ENCODE measurements at regions of chr7 and their contacts with region 1.

Region 1: DNA sequence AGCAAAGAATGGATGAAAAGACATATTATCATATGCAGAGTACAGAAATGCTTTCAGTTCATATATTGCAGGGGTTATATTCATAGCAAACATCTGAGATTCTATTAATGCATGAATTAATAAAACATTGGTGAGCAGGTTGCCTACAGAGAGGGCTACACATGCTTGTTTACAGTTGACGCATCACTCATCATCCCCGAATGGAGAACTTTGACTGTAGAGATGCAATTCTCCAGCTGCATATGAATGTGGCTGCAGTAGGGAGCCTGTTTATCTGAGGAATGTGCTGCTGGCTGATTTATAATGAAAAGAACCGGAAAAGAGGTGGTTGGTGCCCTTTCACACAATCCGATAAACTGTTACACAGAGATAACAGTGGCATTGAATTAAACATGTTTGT is 116.5 kb downstream of the GRM3 start:
- DNase-seq: no peak
- ATAC-seq: no peak
- H3K4me3 Mint-ChIP-seq: no peak overlapping the region
- H3K27ac Mint-ChIP-seq: no peak overlapping the region
- H3K4me1 Mint-ChIP-seq: no peaks in the 10 kb centered on the region
- H3K27me3 Mint-ChIP-seq: no peaks in the 10 kb centered on the region

Region 2: DNA sequence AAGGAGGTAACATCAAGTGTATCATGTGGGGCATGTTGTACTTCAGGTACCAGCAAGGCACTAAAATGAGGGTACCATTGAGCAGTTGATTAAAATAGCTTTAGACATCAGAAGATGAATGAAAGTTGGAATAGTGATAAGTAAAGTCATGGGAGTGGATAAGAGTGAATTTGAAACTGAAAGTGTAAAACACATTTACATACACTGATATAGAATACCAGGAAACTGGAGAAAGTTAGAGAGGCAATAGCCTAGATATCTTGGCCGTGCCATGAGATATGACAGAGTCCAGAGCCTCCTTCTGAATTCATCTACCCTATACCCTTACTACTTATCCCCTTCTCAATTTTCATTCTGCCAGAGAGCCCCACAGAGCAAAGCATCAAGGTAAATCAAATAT is 39.9 kb before region 1 on chr7:
- CTCF ChIA-PET with region 1: no interaction called
- POLR2A ChIA-PET with region 1: no interaction called
- intact Hi-C with region 1: no loop called
- DNase-seq: no peak
- ATAC-seq: no peak
- H3K4me3 Mint-ChIP-seq: no peak overlapping the region
- H3K27ac Mint-ChIP-seq: no peak overlapping the region
- H3K4me1 Mint-ChIP-seq: no peaks in the 10 kb centered on the region
- H3K27me3 Mint-ChIP-seq: no peaks in the 10 kb centered on the region

Region 3: GRCh38 chr7:86748843-86749719 is 11.2 kb before region 1 on chr7:
- CTCF ChIA-PET with region 1: no interaction called
- POLR2A ChIA-PET with region 1: no interaction called
- intact Hi-C with region 1: loop called in 1 of 2 experiments (anchors 1 kb)
- DNase-seq: no peak
- ATAC-seq: no peak
- H3K4me3 Mint-ChIP-seq: no peak overlapping the region
- H3K27ac Mint-ChIP-seq: no peak overlapping the region
- H3K4me1 Mint-ChIP-seq: no peaks in the 10 kb centered on the region
- H3K27me3 Mint-ChIP-seq: peaks cover 2% of the 10 kb centered on the region

Region 4: GRCh38 chr7:86773309-86773708 is 13.1 kb after region 1 on chr7:
- CTCF ChIA-PET with region 1: no interaction called
- POLR2A ChIA-PET with region 1: no interaction called
- intact Hi-C with region 1: no loop called
- DNase-seq: no peak
- ATAC-seq: no peak
- H3K4me3 Mint-ChIP-seq: no peak overlapping the region
- H3K27ac Mint-ChIP-seq: no peak overlapping the region
- H3K4me1 Mint-ChIP-seq: no peaks in the 10 kb centered on the region
- H3K27me3 Mint-ChIP-seq: no peaks in the 10 kb centered on the region

Region 5: GRCh38 chr7:86884152-86884551 is 123.9 kb after region 1 on chr7:
- CTCF ChIA-PET with region 1: no interaction called
- POLR2A ChIA-PET with region 1: no interaction called
- intact Hi-C with region 1: no loop called
- DNase-seq: no peak
- ATAC-seq: no peak
- H3K4me3 Mint-ChIP-seq: no peak overlapping the region
- H3K27ac Mint-ChIP-seq: no peak overlapping the region
- H3K4me1 Mint-ChIP-seq: no peaks in the 10 kb centered on the region
- H3K27me3 Mint-ChIP-seq: no peaks in the 10 kb centered on the region

Region 6: GRCh38 chr7:87463982-87464381 is 703.7 kb after region 1 on chr7:
- CTCF ChIA-PET with region 1: no interaction called
- POLR2A ChIA-PET with region 1: no interaction called
- intact Hi-C with region 1: no loop called
- DNase-seq: no peak
- ATAC-seq: no peak
- H3K4me3 Mint-ChIP-seq: no peak overlapping the region
- H3K27ac Mint-ChIP-seq: no peak overlapping the region
- H3K4me1 Mint-ChIP-seq: no peaks in the 10 kb centered on the region
- H3K27me3 Mint-ChIP-seq: peaks cover 23% of the 10 kb centered on the region

Measured in activated CD4-positive, alpha-beta T cell treated with anti-CD3 and anti-CD28 coated beads for 36 hours (primary cell).